Colonic mucosa (tissue), 4 donors: ENCODE measurements at regions of chr17 and their contacts with region 1.

Region 1: DNA sequence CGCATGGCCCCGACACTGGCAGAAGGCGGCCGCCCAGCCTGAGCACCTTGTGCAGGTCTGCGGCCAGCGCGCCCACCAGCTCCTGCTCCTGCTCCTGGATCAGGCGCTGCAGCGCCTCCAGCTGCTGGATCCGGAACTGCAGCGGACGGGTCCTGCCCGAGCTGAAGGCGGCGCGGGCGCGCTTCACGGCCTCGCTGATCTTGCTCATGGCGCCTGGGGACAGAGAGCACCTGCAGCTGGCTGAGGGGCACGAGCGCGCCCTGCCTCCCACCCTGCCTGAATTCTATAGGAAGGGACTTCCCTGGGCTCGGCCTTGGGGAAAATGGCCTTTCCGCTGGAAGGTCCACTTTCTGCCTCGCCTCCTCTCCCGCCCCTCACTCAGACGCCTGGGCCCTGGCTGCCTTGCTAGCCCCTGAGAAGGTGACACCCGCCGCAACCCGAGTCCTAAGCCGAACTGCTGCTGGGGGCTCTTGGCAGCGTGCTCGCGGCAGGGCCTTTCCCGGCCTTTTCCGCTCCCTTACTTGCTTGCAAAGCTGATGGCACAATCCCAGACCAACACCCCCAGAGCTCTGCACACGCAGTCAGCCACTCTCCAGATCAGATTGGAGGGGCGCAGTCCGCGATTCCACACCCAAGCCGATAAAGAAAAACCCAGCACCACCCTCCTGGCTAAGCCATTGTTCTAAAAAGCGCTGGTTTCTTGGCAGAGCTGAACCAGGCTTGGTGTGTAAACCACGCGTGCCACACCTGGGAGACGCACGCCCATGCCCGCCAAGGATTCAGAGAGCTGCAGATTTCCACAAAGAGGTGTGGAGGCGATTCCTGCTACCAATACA is 3.0 kb downstream of the ALDH3A1 start:
- DNase-seq: peak; percentile 97
- H3K4me3 ChIP-seq: peak overlapping the region; percentile 42
- H3K27ac ChIP-seq: peak overlapping the region; percentile 75
- H3K4me1 ChIP-seq: peaks cover 3% of the 10 kb centered on the region
- H3K27me3 ChIP-seq: no peaks in the 10 kb centered on the region
- CTCF ChIP-seq: peak; percentile 98

Region 2: GRCh38 chr17:19447085-19447583 is 298.0 kb before region 1 on chr17:
- intact Hi-C with region 1: no loop called
- DNase-seq: peak; percentile 89
- H3K4me3 ChIP-seq: no peak overlapping the region
- H3K27ac ChIP-seq: peak overlapping the region; percentile 59
- H3K4me1 ChIP-seq: no peaks in the 10 kb centered on the region
- H3K27me3 ChIP-seq: no peaks in the 10 kb centered on the region
- CTCF ChIP-seq: peak; percentile 95

Region 3: DNA sequence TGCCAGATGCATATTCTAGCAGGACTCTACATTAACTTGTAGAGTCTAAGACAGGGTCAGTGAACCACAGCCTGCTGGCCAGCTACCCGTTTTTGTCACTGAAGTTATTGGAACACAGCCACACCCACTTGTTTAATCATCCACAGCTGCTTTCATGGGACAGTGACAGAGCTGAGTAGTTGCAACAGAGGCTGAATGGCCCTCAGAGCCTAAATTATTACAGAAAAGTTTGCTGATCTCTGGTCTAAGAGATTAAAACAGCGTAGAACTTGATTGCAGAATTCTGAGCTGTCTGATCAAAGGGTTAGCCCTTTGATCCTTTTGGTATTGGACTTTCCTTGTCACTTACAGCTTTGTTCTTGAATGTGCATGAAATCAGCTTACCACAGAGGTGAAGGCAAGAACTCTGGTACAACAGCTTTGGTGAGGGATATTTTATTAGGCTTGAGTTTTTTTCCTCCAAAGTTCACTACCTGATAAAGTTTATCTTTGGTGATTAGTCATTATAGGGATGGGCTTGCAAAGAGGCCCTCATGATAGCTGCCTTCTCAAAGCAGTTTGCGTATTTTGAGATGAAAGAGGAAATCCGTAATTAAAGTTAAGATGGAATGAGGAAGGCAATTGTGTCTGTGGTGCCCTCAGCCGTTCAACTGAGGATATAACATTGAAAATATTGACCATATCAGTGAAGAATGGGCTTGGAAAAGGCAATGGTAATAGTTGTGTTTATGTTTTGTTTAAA is 73.0 kb before region 1 on chr17:
- intact Hi-C with region 1: loop called (anchors 10 kb)
- DNase-seq: peak; percentile 62
- H3K4me3 ChIP-seq: no peak overlapping the region
- H3K27ac ChIP-seq: peak overlapping the region; percentile 66
- H3K4me1 ChIP-seq: no peaks in the 10 kb centered on the region
- H3K27me3 ChIP-seq: no peaks in the 10 kb centered on the region
- CTCF ChIP-seq: no peak

Region 4: DNA sequence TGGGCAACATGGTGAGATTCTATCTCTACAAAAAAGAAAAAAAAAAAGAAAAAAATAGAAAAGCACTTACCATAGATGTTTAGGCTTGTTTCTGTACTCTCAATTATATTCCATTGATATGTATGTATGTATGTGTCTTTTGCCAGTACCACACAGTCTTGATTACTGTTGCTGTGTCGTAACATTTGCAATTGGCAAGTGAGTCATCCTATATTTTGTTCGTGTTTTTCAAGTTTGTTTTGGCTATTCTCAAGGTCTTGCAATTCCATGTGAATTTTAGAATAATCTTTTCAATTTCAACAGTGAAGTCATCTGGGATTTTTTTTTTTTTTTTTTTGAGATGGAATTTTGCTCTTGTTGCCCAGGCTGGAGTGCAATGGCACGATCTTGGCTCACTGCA is 283.3 kb after region 1 on chr17:
- intact Hi-C with region 1: no loop called
- DNase-seq: no peak
- H3K4me3 ChIP-seq: no peak overlapping the region
- H3K27ac ChIP-seq: no peak overlapping the region
- H3K4me1 ChIP-seq: no peaks in the 10 kb centered on the region
- H3K27me3 ChIP-seq: no peaks in the 10 kb centered on the region
- CTCF ChIP-seq: no peak